Dorsolateral prefrontal cortex (tissue), 120 donors: ENCODE measurements at regions of chr10 and their contacts with region 1.

Region 1: GRCh38 chr10:102503281-102504220 is at the start of gene SUFU:
- DNase-seq: peak; percentile 96 to 99 (median 99)
- H3K4me3 ChIP-seq: peak within 1 kb of the TSS; percentile 68 to 100 (median 97)
- H3K27ac ChIP-seq: peak within 1 kb of the TSS; percentile 77 to 98 (median 93)
- H3K27me3 ChIP-seq: no peaks in the 10 kb centered on the region
- CTCF ChIP-seq: peak; percentile 88 to 99 (median 95)
- total RNA-seq, gene SUFU: 9.6 to 23.5 (median 14.8) TPM

Region 2: DNA sequence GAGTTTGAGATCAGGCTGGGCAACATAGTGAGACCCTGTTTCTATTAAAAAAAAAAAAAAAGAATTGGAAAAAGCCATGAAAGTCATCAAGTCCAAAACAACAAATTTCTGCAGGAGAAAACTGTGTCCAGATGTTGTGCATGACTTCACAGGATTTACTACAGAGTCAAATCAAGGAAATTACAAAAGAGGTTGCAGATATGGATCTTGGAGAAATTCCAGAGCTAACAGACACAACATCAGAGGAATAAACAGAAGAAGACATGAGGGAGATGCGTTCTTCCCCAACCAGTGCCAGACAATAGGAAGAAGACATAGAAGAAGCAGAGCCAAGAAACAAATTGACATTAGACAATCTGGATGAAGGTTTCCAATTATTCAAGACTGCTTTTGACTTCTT is 635.6 kb before region 1 on chr10:
- intact Hi-C with region 1: no loop called
- DNase-seq: no peak
- H3K4me3 ChIP-seq: no peak overlapping the region
- H3K27ac ChIP-seq: no peak overlapping the region
- H3K27me3 ChIP-seq: no peaks in the 10 kb centered on the region
- CTCF ChIP-seq: no peak

Region 3: DNA sequence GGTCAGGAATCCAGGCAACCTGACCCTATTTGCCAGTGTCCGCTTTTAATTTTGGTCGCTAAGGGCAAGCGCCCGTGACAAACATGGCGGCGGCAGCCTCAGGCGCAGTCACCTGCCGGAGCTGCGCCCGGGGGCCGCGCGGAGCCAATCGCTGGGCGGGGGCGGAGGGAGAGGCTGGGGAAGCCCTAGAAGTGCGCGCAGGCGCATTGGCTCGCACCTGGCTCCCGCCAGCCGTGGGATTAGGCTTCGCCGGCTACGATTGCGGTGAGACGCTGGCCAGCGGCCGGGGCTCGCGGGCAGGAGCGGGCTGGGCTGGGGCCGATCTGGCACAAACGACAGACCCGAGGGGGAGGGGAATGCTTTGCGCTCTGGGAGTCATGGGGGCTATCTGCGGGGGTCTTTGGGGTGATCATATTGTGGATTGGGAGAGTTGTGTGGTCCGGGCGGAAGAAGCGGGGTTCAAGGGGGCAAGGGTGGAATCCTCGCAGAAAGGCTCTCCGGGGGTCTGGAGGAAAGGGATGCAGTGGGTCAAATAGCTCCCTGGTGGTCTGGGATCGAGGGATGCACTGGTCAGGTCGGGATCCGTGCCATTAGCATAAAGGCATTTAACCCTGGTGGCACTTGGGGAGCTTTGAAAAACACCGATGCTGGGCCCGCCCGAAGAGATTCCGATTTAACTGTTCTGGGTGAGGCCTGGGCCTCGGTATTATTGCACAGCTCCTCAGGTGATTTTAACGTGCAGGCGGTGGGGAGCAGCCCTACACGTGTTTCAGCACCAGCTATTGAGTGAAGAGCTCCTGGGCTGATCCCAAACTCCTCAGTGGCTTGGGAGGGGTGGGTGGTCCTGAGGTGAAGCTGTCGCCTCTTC is 42.1 kb before region 1 on chr10:
- intact Hi-C with region 1: loop called in 1 of 2 experiments (anchors 5 kb)
- DNase-seq: peak; percentile 84 to 96 (median 90)
- H3K4me3 ChIP-seq: peak overlapping the region; percentile 39 to 83 (median 71)
- H3K27ac ChIP-seq: peak overlapping the region in 53 of 59 donors; percentile 7 to 86 (median 66)
- H3K27me3 ChIP-seq: no peaks in the 10 kb centered on the region
- CTCF ChIP-seq: peak in 17 of 56 donors; percentile 6 to 51 (median 28)

Region 4: DNA sequence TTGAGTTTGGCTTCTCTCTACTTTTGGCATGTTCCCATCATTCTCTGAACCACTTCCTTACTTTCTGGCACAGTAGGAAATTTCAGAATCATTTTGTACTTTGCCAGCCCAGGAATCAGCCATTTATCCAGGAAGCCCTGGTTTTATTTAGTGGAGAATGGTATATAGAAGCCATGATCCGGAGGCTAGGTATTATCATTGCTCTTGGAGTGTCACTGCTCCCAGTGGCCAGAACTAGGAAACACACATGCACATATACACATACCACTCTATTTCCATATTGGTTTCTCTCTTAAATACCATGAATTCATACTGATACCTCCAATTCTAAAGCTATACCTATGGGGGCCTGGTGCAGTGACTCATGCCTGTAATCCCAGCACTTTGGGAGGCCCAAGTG is 36.5 kb after region 1 on chr10:
- intact Hi-C with region 1: no loop called
- DNase-seq: no peak
- H3K4me3 ChIP-seq: no peak overlapping the region
- H3K27ac ChIP-seq: no peak overlapping the region
- H3K27me3 ChIP-seq: no peaks in the 10 kb centered on the region
- CTCF ChIP-seq: peak in 17 of 56 donors; percentile 7 to 48 (median 23)

Region 5: DNA sequence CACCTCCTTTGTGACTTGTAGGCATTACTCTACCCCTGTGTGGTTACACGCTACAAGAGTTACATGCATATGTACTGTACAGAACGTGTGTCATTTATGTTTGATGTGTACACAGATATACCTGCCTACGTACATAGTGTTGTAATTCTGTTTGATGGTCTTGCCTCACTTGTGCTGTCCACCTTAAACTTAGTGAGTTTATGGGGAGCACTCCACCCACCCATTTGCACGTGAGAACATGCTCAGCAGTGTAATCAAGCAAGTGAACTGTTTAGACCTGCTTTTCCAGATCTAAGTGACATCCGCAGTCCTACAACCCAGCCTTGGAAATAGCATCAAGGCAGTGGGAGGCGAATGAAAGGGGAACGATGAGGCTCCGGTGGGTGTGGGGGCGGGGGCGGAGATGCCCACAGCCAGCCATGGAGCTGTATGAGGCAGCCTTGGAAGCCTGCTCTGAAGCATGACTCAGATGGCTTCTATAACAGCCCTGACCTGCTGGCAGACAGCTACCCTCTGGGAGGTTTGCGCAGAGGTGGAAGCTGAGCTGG is 52.3 kb after region 1 on chr10:
- intact Hi-C with region 1: no loop called
- DNase-seq: peak in 7 of 10 donors; percentile 21 to 74 (median 56)
- H3K4me3 ChIP-seq: no peak overlapping the region
- H3K27ac ChIP-seq: peak overlapping the region in 32 of 59 donors; percentile 6 to 73 (median 42)
- H3K27me3 ChIP-seq: no peaks in the 10 kb centered on the region
- CTCF ChIP-seq: no peak

Region 6: DNA sequence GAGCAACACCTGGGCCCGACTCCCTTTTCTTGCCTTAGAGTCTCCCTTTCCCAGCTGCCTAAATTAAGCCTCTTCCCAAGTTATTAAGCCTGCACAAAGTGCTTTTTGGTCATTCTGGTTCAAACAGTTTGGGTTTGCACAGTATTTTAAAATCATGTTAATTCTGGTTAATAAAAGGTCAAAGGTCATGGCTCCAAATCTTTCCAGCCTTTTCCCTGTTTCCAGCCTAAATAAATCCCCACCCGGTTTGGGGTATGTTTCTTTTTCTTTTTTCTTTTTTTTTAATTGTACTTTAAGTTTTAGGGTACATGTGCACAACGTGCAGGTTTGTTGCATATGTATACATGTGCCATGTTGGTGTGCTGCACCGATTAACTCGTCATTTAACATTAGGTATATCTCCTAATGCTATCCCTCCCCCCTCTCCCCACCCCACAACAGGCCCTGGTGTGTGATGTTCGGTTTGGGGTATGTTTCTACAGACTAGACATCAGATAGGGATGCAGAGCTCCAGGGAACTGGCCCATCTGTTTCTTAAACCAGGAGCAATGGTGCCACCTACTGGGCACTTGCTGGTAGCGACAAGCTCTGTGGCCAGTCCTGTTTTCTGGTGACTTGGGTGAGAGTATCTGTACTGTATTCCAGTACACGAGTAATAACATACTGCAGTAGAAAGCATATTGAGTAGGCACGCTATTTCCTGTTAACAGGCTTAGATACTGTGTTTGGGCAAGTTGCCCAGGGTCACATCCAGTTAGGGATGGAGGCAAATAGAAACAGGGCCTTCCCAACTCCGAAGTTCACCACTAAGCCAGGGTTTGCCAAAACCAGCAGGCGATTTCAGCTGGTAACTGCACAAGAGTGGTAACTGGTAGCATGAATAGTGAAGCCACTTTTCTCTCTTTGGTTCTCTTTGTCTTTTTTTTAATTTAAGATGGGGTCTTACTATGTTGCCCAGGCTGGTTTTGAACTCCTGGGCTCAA is 80.2 kb after region 1 on chr10:
- intact Hi-C with region 1: loop called (anchors 1 to 2 kb)
- DNase-seq: peak; percentile 83 to 96 (median 90)
- H3K4me3 ChIP-seq: no peak overlapping the region
- H3K27ac ChIP-seq: peak overlapping the region in 6 of 59 donors; percentile 5 to 71 (median 24)
- H3K27me3 ChIP-seq: no peaks in the 10 kb centered on the region
- CTCF ChIP-seq: peak; percentile 68 to 96 (median 90)

Region 7: GRCh38 chr10:102596506-102596971 is 93.0 kb after region 1 on chr10:
- intact Hi-C with region 1: loop called in 1 of 2 experiments (anchors 5 kb)
- DNase-seq: peak in 7 of 10 donors; percentile 32 to 67 (median 58)
- H3K4me3 ChIP-seq: no peak overlapping the region
- H3K27ac ChIP-seq: peak overlapping the region in 43 of 59 donors; percentile 1 to 72 (median 39)
- H3K27me3 ChIP-seq: no peaks in the 10 kb centered on the region
- CTCF ChIP-seq: peak in 55 of 56 donors; percentile 29 to 83 (median 75)

Region 8: GRCh38 chr10:102641880-102642735 is 138.6 kb after region 1 on chr10:
- intact Hi-C with region 1: loop called (anchors 2 kb)
- DNase-seq: peak; percentile 95 to 99 (median 98)
- H3K4me3 ChIP-seq: peak overlapping the region; percentile 63 to 99 (median 88)
- H3K27ac ChIP-seq: peak overlapping the region; percentile 94 to 100 (median 99)
- H3K27me3 ChIP-seq: no peaks in the 10 kb centered on the region
- CTCF ChIP-seq: peak in 22 of 56 donors; percentile 1 to 48 (median 24)

Region 9: DNA sequence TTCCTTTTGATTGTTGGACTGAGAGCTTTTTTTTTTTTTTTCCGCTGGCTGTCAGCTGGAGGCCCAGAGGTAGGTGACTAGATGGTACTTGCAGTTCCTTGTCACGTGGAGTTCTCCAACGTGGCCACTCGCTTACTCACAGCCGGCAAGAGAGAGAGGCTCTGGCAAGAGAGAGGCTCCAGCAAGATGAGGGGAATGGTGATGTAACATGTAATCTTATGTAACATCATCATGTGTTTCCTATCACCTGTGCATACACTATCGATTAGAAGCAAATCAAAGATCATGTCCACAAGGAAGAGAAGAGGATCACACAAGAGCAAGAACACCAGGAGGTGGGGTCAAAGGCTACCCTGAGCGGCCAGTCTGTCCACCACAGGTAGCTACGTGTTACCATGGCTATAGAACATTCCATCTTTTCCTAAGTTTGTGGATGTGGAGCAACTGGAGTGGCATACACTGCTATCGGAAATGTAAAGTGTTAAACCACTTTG is 346.5 kb after region 1 on chr10:
- intact Hi-C with region 1: no loop called
- DNase-seq: no peak
- H3K4me3 ChIP-seq: no peak overlapping the region
- H3K27ac ChIP-seq: no peak overlapping the region
- H3K27me3 ChIP-seq: no peaks in the 10 kb centered on the region
- CTCF ChIP-seq: no peak